ENCODE measurements at regions of chr1 and their contacts with region 1.

Region 1: DNA sequence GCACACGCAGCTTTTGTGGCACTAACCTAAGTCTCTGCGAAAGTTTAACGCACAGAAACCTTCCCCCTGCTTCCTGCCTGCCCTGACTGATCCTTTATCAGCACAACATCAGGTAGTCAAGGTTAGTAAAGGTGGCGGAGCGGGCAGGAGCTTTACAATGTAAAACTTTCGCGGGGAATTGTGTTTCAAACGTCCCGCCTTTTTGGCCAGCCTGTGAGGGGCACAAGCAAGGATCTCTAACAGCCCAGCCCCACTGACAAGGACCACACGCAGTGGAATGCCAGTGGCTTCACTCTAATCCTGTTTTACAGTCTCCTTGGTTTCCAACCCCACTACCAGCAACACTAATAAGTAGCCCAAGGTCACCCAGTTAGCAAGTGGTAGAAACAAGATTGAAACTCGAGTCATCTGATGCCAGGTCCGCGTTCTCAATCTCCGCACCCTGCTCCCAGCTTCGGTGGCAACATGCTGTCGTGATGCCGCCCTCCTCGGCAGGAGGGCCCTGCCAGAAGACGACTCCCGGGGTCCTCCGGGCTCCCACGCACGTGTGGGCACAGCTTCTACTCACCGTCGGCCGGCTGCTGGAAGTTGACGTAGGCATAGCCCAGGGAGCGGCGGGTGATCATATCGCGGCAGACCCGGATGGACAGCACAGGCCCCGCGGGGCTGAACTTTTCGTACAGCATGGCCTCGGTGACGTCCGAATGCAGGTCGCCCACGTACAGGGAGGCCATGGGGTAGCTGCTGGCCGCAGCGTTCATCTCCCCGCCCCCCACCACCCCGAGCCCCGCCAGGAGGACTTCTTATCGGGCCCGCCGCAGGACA is 1.2 kb downstream of the PABPC4 start:
- DNase-seq: peak; percentile 69
- ATAC-seq: peak; percentile 40
- H3K4me3 Mint-ChIP-seq: peak overlapping the region; percentile 90
- H3K27ac Mint-ChIP-seq: peak overlapping the region; percentile 90
- H3K4me1 Mint-ChIP-seq: peaks cover 42% of the 10 kb centered on the region
- H3K27me3 Mint-ChIP-seq: no peaks in the 10 kb centered on the region

Region 2: DNA sequence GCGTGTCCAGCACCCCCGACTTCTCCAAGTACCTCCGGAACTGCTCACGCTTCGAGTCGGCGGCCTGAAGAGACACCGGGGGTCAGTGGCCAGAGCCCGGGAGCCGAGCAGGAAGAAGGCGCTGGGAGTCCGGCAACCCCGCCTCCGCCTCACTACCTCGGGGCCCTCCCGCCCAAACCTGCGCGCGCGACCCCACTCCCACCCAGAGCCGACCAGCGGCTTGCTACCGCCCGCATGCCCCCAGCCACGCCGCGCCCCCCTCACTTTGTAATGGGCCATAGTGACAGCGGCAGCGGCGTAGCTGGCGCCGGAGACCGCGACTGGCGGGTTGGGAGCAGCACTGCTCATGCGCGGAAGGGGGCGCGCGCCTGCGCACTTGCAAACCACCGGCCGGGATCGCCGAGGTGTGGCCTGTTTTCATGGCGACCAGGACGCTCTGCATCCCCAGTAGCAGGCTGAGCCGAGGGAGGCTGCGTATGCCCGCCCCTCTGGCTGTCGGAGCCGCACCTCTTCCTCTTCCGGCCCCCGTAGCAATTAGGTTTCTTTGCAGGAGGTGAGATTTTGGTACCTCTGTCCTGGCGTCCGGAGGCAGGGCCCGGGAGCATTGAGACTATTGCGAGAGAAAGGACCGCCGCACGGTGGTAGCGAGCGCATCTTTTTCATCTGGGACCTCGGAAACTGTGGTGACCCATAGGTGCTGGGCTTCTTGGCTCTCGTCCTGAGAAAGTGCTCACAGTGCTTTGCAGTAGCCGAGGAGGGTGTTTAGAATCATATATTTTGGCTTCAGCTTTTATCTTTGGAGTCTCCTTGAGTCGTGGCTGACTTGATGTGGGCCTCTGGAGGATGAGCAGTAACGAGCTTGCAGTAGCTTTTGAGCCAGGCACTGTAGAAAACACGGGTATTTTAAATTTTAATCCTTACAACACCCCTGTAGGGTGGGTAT is 702.1 kb before region 1 on chr1 and contains the start of gene MYCBP:
- CTCF ChIA-PET with region 1: no interaction called
- POLR2A ChIA-PET with region 1: interaction called, 3 read pairs
- intact Hi-C with region 1: loop called in 1 of 2 experiments (anchors 5 kb)
- DNase-seq: peak; percentile 97
- ATAC-seq: peak; percentile 99
- H3K4me3 Mint-ChIP-seq: peak within 1 kb of the TSS; percentile 92
- H3K27ac Mint-ChIP-seq: peak within 1 kb of the TSS; percentile 83
- H3K4me1 Mint-ChIP-seq: peaks cover 26% of the 10 kb centered on the region
- H3K27me3 Mint-ChIP-seq: no peaks in the 10 kb centered on the region
- total RNA-seq, gene MYCBP: 44.4 to 46.8 TPM

Region 3: GRCh38 chr1:39189592-39190041 is 385.8 kb before region 1 on chr1:
- CTCF ChIA-PET with region 1: no interaction called
- POLR2A ChIA-PET with region 1: no interaction called
- intact Hi-C with region 1: loop called in 1 of 2 experiments (anchors 5 kb)
- DNase-seq: no peak
- ATAC-seq: no peak
- H3K4me3 Mint-ChIP-seq: no peak overlapping the region
- H3K27ac Mint-ChIP-seq: peak overlapping the region; percentile 91
- H3K4me1 Mint-ChIP-seq: peaks cover 90% of the 10 kb centered on the region
- H3K27me3 Mint-ChIP-seq: no peaks in the 10 kb centered on the region

Region 4: GRCh38 chr1:39564340-39564739 is 11.1 kb before region 1 on chr1:
- CTCF ChIA-PET with region 1: interaction called, 5 read pairs
- POLR2A ChIA-PET with region 1: interaction called, 5 read pairs
- intact Hi-C with region 1: loop called in 1 of 2 experiments (anchors 1 kb)
- DNase-seq: no peak
- ATAC-seq: no peak
- H3K4me3 Mint-ChIP-seq: no peak overlapping the region
- H3K27ac Mint-ChIP-seq: no peak overlapping the region
- H3K4me1 Mint-ChIP-seq: peaks cover 6% of the 10 kb centered on the region
- H3K27me3 Mint-ChIP-seq: no peaks in the 10 kb centered on the region

Region 5: GRCh38 chr1:39738622-39739366 is 163.4 kb after region 1 on chr1 and contains the start of gene PPIE:
- CTCF ChIA-PET with region 1: interaction called, 3 read pairs
- POLR2A ChIA-PET with region 1: no interaction called
- intact Hi-C with region 1: loop called in 1 of 2 experiments (anchors 1 kb)
- DNase-seq: peak; percentile 99
- ATAC-seq: peak; percentile 98
- H3K4me3 Mint-ChIP-seq: peak within 1 kb of the TSS; percentile 96
- H3K27ac Mint-ChIP-seq: peak within 1 kb of the TSS; percentile 94
- H3K4me1 Mint-ChIP-seq: peaks cover 36% of the 10 kb centered on the region
- H3K27me3 Mint-ChIP-seq: peaks cover 7% of the 10 kb centered on the region
- total RNA-seq, gene PPIE: 55.3 to 70.4 TPM

Region 6: GRCh38 chr1:39907528-39908453 is 332.4 kb after region 1 on chr1:
- CTCF ChIA-PET with region 1: no interaction called
- POLR2A ChIA-PET with region 1: no interaction called
- intact Hi-C with region 1: no loop called
- DNase-seq: no peak
- ATAC-seq: no peak
- H3K4me3 Mint-ChIP-seq: no peak overlapping the region
- H3K27ac Mint-ChIP-seq: no peak overlapping the region
- H3K4me1 Mint-ChIP-seq: no peaks in the 10 kb centered on the region
- H3K27me3 Mint-ChIP-seq: peaks cover 36% of the 10 kb centered on the region